Ascending aorta (tissue), 2 donors: ENCODE measurements at regions of chrX and their contacts with region 1.

Region 1: DNA sequence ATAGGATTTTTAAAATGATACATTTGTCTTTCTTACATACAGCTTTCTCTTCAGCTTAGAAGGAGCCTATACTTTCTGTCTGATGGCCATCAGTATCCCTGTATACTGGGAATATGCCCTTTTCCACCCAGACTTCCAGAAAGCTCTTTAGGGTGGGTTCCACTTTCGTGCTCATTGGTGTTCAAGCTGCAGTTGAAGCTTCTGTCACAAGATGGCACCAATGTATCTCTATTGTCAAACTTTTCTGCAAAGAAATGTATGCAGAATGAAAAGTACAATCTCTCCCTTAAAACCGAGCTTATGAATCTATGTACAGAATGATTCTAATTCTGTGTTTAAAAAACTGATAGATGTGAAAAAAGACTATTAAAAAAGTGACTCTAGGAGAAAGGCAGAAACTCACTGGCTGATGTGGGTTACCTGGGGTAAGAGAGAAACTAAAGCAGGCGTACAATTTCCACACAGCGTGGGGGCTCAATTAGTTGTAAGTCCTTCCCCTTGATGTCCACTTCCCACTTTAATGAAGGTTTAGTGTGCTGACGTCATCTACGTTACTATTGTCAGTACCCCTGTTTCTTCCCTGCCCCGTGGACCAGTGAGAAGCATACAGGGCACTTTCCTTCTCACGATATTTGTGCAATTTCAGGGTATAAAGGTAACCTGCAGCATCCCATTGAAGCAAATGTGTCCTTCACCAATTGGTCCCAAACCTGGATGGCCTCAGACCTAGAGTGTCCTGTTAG is 57.3 kb upstream of the TCEAL2 start:
- DNase-seq: no peak
- H3K4me3 ChIP-seq: no peak overlapping the region
- H3K27ac ChIP-seq: no peak overlapping the region
- H3K4me1 ChIP-seq: no peaks in the 10 kb centered on the region
- H3K27me3 ChIP-seq: no peaks in the 10 kb centered on the region
- CTCF ChIP-seq: peak in 2 of 3 experiments; percentile 51 to 62

Region 2: GRCh38 chrX:102008901-102009300 is 59.2 kb before region 1 on chrX:
- intact Hi-C with region 1: no loop called
- DNase-seq: no peak
- H3K4me3 ChIP-seq: no peak overlapping the region
- H3K27ac ChIP-seq: no peak overlapping the region
- H3K4me1 ChIP-seq: no peaks in the 10 kb centered on the region
- H3K27me3 ChIP-seq: no peaks in the 10 kb centered on the region
- CTCF ChIP-seq: no peak

Region 3: GRCh38 chrX:102863735-102864134 is 795.6 kb after region 1 on chrX:
- intact Hi-C with region 1: loop called (anchors 10 kb)
- DNase-seq: peak; percentile 45 to 91
- H3K4me3 ChIP-seq: no peak overlapping the region
- H3K27ac ChIP-seq: no peak overlapping the region
- H3K4me1 ChIP-seq: no peaks in the 10 kb centered on the region
- H3K27me3 ChIP-seq: no peaks in the 10 kb centered on the region
- CTCF ChIP-seq: peak; percentile 44 to 87 (median 86)